Activated CD8-positive, alpha-beta T cell treated with anti-CD3 and anti-CD28 coated beads, Interleukin-2, amount 10 ng/mL, durations not matched to agents 7 days and 5 days (primary cell): ENCODE measurements at regions of chr7 and their contacts with region 1.

Region 1: GRCh38 chr7:129617652-129618051 is 6.1 kb downstream of the NRF1 start:
- DNase-seq: no peak
- ATAC-seq: no peak
- H3K4me3 Mint-ChIP-seq: no peak overlapping the region
- H3K27ac Mint-ChIP-seq: no peak overlapping the region
- H3K4me1 Mint-ChIP-seq: peaks cover 61% of the 10 kb centered on the region
- H3K27me3 Mint-ChIP-seq: no peaks in the 10 kb centered on the region

Region 2: DNA sequence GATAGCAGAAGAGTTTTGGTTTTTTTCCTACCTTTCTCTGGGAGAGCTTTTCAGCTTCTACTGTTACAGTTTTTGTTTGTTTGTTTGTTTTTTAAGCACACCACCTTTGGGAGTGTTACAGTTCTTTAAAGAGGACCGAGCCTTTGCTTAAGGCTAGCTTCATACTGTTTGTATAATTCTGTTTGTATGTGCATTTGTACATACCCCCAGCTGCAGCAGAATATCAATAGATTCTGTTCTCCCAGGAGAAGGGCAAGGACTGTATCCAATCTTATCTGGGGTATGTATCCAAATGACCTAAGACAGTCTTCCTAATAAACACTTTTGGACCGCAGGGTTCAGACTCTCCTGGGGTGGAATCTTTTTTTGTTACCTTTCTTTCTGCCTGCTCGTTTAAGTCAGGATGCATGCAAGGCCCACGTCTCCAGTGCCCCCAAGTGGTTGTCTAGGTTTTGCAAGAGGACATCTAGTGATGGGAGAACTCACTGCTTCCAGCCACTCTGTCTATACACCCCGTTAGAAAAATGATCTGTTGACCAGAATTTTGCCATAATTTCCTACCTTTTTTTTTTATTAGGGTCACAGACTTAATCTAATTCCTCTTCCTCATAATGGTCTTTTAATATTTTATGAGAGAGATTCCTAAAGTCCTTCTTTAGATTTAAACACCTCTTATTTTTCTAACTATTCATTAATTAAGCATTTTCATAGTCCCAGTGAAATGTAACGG is 17.8 kb after region 1 on chr7:
- CTCF ChIA-PET with region 1: interaction called, 46 read pairs
- POLR2A ChIA-PET with region 1: interaction called, 4 read pairs
- DNase-seq: peak; percentile 80
- ATAC-seq: peak; percentile 86
- H3K4me3 Mint-ChIP-seq: no peak overlapping the region
- H3K27ac Mint-ChIP-seq: no peak overlapping the region
- H3K4me1 Mint-ChIP-seq: peaks cover 32% of the 10 kb centered on the region
- H3K27me3 Mint-ChIP-seq: no peaks in the 10 kb centered on the region